ENCODE measurements at regions of chr4 and their contacts with region 1.

Region 1: GRCh38 chr4:89657931-89658700 is 178.8 kb downstream of the SNCA start:
- DNase-seq: no peak
- H3K4me3 ChIP-seq: no peak overlapping the region
- H3K27ac ChIP-seq: no peak overlapping the region
- H3K4me1 ChIP-seq: peaks cover 29% of the 10 kb centered on the region
- H3K27me3 ChIP-seq: no peaks in the 10 kb centered on the region
- CTCF ChIP-seq: peak; percentile 32 to 56

Region 2: GRCh38 chr4:89009115-89009514 is 649.0 kb before region 1 on chr4:
- CTCF ChIA-PET with region 1: no interaction called
- dilution Hi-C with region 1: no loop called
- in situ Hi-C with region 1: no loop called
- intact Hi-C with region 1: no loop called
- DNase-seq: no peak
- H3K4me3 ChIP-seq: no peak overlapping the region
- H3K27ac ChIP-seq: no peak overlapping the region
- H3K4me1 ChIP-seq: no peaks in the 10 kb centered on the region
- H3K27me3 ChIP-seq: no peaks in the 10 kb centered on the region
- CTCF ChIP-seq: no peak

Region 3: GRCh38 chr4:89558147-89558546 is 100.0 kb before region 1 on chr4:
- CTCF ChIA-PET with region 1: no interaction called
- dilution Hi-C with region 1: no loop called
- in situ Hi-C with region 1: no loop called
- intact Hi-C with region 1: no loop called
- DNase-seq: peak; percentile 6
- H3K4me3 ChIP-seq: no peak overlapping the region
- H3K27ac ChIP-seq: no peak overlapping the region
- H3K4me1 ChIP-seq: no peaks in the 10 kb centered on the region
- H3K27me3 ChIP-seq: no peaks in the 10 kb centered on the region
- CTCF ChIP-seq: peak; percentile 25 to 50

Region 4: GRCh38 chr4:89681215-89681614 is 23.1 kb after region 1 on chr4:
- CTCF ChIA-PET with region 1: no interaction called
- dilution Hi-C with region 1: no loop called
- in situ Hi-C with region 1: no loop called
- intact Hi-C with region 1: loop called (anchors 1 kb)
- DNase-seq: peak; percentile 94
- H3K4me3 ChIP-seq: peak overlapping the region; percentile 57 to 97 (median 91)
- H3K27ac ChIP-seq: peak overlapping the region; percentile 85
- H3K4me1 ChIP-seq: peaks cover 10% of the 10 kb centered on the region
- H3K27me3 ChIP-seq: no peaks in the 10 kb centered on the region
- CTCF ChIP-seq: no peak

Region 5: DNA sequence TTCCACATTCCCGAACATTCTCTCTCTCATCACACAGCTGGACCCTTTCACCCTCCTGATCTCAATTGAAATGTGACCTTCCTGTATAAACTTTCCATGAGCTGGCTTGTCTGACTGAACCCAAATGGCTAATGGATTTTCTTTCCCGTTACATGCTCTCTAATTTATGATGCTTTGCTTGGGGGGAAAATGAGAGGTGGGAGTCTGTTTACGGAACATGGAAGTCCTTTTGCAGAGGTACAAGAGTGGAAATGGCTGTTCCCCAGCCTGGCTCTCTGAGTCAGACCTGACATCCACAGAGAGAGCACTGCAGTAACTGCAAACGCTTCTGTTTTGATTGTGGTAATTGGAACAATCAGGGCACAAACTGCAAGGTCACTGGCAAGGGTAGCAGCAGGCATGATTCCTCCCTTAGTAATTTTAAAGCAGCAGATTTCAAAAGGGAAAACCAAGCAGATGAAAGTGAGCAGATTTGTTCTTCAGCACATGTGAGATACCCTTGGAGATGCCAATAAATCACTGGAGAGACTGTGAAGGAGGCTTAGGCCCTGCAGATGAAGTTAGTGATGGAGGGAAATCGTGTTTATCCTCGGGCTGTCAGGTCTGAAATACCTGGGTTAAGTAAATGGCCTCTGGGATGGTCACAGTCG is 94.9 kb after region 1 on chr4:
- CTCF ChIA-PET with region 1: no interaction called
- dilution Hi-C with region 1: no loop called
- in situ Hi-C with region 1: no loop called
- intact Hi-C with region 1: loop called (anchors 5 kb)
- DNase-seq: peak; percentile 45
- H3K4me3 ChIP-seq: peak overlapping the region in 1 of 3 experiments; percentile 10
- H3K27ac ChIP-seq: peak overlapping the region; percentile 92
- H3K4me1 ChIP-seq: peaks cover 17% of the 10 kb centered on the region
- H3K27me3 ChIP-seq: no peaks in the 10 kb centered on the region
- CTCF ChIP-seq: no peak

Region 6: GRCh38 chr4:89836897-89837384 is 178.8 kb after region 1 on chr4 and contains the start of gene SNCA:
- CTCF ChIA-PET with region 1: no interaction called
- dilution Hi-C with region 1: no loop called
- in situ Hi-C with region 1: loop called in 1 of 2 experiments (anchors 25 kb)
- intact Hi-C with region 1: loop called (anchors 1 kb)
- DNase-seq: peak; percentile 81
- H3K4me3 ChIP-seq: peak within 1 kb of the TSS; percentile 72 to 91 (median 78)
- H3K27ac ChIP-seq: peak within 1 kb of the TSS; percentile 53
- H3K4me1 ChIP-seq: peaks cover 9% of the 10 kb centered on the region
- H3K27me3 ChIP-seq: no peaks in the 10 kb centered on the region
- CTCF ChIP-seq: no peak
- total RNA-seq, gene SNCA: 53.8 to 62.4 TPM

Region 7: GRCh38 chr4:89868999-89869589 is 211.0 kb after region 1 on chr4:
- CTCF ChIA-PET with region 1: no interaction called
- dilution Hi-C with region 1: no loop called
- in situ Hi-C with region 1: loop called in 1 of 2 experiments (anchors 10 kb)
- intact Hi-C with region 1: loop called (anchors 1 kb)
- DNase-seq: no peak
- H3K4me3 ChIP-seq: no peak overlapping the region
- H3K27ac ChIP-seq: no peak overlapping the region
- H3K4me1 ChIP-seq: no peaks in the 10 kb centered on the region
- H3K27me3 ChIP-seq: no peaks in the 10 kb centered on the region
- CTCF ChIP-seq: peak; percentile 53 to 54

Region 8: GRCh38 chr4:89898304-89898716 is 240.2 kb after region 1 on chr4:
- CTCF ChIA-PET with region 1: no interaction called
- dilution Hi-C with region 1: no loop called
- in situ Hi-C with region 1: no loop called
- intact Hi-C with region 1: loop called (anchors 1 kb)
- DNase-seq: no peak
- H3K4me3 ChIP-seq: no peak overlapping the region
- H3K27ac ChIP-seq: no peak overlapping the region
- H3K4me1 ChIP-seq: no peaks in the 10 kb centered on the region
- H3K27me3 ChIP-seq: peaks cover 5% of the 10 kb centered on the region
- CTCF ChIP-seq: no peak

Region 9: GRCh38 chr4:89981789-89982334 is 323.7 kb after region 1 on chr4:
- CTCF ChIA-PET with region 1: no interaction called
- dilution Hi-C with region 1: no loop called
- in situ Hi-C with region 1: no loop called
- intact Hi-C with region 1: no loop called
- DNase-seq: no peak
- H3K4me3 ChIP-seq: no peak overlapping the region
- H3K27ac ChIP-seq: no peak overlapping the region
- H3K4me1 ChIP-seq: no peaks in the 10 kb centered on the region
- H3K27me3 ChIP-seq: no peaks in the 10 kb centered on the region
- CTCF ChIP-seq: no peak

Region 10: GRCh38 chr4:90293320-90293719 is 635.2 kb after region 1 on chr4:
- CTCF ChIA-PET with region 1: no interaction called
- dilution Hi-C with region 1: no loop called
- in situ Hi-C with region 1: no loop called
- intact Hi-C with region 1: loop called (anchors 10 kb)
- DNase-seq: no peak
- H3K4me3 ChIP-seq: no peak overlapping the region
- H3K27ac ChIP-seq: no peak overlapping the region
- H3K4me1 ChIP-seq: no peaks in the 10 kb centered on the region
- H3K27me3 ChIP-seq: peaks cover 3% of the 10 kb centered on the region
- CTCF ChIP-seq: peak; percentile 36 to 51

Measured in mammary epithelial cell (primary cell).